ENCODE measurements at regions of chr7 and their contacts with region 1.

Region 1: DNA sequence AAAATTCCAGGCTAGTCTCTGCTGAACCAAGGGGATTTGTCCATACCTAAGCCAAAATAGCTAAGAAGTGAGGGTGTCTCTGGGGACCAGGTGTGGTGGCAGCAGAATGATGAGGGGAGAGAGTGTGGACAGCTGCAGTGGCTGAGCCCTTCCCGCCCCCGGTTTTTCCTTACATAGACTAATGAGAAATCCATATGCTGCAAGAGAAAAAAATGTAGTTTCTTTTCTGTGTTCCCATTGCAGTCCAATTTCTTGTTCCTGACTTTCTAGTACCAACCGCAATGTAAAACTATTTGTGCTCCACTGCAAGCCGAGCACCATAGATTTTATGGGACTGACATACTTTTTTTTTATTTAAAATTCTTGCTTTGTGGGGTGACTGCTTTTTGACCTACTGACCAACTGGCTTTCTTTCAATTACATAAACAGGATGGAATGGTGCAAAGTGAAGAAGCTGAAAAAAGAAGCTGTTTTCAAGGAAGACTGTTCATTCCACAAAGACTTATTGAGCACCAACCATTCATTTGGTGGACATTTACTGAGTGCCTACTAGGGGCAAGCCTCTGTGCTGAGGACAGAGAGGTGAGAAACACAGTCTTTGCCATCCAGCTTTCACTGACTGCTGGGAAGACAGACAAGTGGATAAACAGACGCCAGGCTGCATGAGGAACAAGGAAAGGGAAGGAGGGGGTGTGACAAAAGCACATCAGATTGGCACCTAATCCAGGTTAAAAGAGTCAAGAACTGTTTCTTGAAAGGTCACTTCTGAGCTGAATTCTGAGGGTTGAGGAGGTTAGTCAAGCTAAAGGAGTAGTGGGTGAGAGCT is 9.8 kb downstream of the CEP41 start:
- DNase-seq: no peak
- ATAC-seq: no peak
- H3K4me3 ChIP-seq: no peak overlapping the region
- H3K4me3 Mint-ChIP-seq: no peak overlapping the region
- H3K27ac ChIP-seq: no peak overlapping the region
- H3K27ac Mint-ChIP-seq: no peak overlapping the region
- H3K4me1 ChIP-seq: peaks cover 9 to 53% of the 10 kb centered on the region in 2 experiments
- H3K4me1 Mint-ChIP-seq: peaks cover 17 to 23% (median 22%) of the 10 kb centered on the region in 3 donors
- H3K27me3 ChIP-seq: no peaks in the 10 kb centered on the region
- H3K27me3 Mint-ChIP-seq: no peaks in the 10 kb centered on the region

Region 2: GRCh38 chr7:130452951-130453350 is 21.9 kb after region 1 on chr7:
- CTCF ChIA-PET with region 1: no interaction called
- POLR2A ChIA-PET with region 1: interaction called in 1 of 2 experiments, 10 read pairs
- DNase-seq: no peak
- ATAC-seq: no peak
- H3K4me3 ChIP-seq: no peak overlapping the region
- H3K4me3 Mint-ChIP-seq: no peak overlapping the region
- H3K27ac ChIP-seq: no peak overlapping the region
- H3K27ac Mint-ChIP-seq: no peak overlapping the region
- H3K4me1 ChIP-seq: no peaks in the 10 kb centered on the region
- H3K4me1 Mint-ChIP-seq: peaks cover under 1 to 17% (median 3%) of the 10 kb centered on the region in 3 donors
- H3K27me3 ChIP-seq: no peaks in the 10 kb centered on the region
- H3K27me3 Mint-ChIP-seq: peaks cover 0 to 4% of the 10 kb centered on the region in 2 donors

Region 3: GRCh38 chr7:131164025-131164899 is 733.2 kb after region 1 on chr7:
- CTCF ChIA-PET with region 1: no interaction called
- POLR2A ChIA-PET with region 1: no interaction called
- DNase-seq: no peak
- ATAC-seq: no peak
- H3K4me3 ChIP-seq: no peak overlapping the region
- H3K4me3 Mint-ChIP-seq: no peak overlapping the region
- H3K27ac ChIP-seq: no peak overlapping the region
- H3K27ac Mint-ChIP-seq: no peak overlapping the region
- H3K4me1 ChIP-seq: no peaks in the 10 kb centered on the region
- H3K4me1 Mint-ChIP-seq: no peaks in the 10 kb centered on the region
- H3K27me3 ChIP-seq: peaks cover 0 to 6% of the 10 kb centered on the region in 2 experiments
- H3K27me3 Mint-ChIP-seq: no peaks in the 10 kb centered on the region

Region 4: DNA sequence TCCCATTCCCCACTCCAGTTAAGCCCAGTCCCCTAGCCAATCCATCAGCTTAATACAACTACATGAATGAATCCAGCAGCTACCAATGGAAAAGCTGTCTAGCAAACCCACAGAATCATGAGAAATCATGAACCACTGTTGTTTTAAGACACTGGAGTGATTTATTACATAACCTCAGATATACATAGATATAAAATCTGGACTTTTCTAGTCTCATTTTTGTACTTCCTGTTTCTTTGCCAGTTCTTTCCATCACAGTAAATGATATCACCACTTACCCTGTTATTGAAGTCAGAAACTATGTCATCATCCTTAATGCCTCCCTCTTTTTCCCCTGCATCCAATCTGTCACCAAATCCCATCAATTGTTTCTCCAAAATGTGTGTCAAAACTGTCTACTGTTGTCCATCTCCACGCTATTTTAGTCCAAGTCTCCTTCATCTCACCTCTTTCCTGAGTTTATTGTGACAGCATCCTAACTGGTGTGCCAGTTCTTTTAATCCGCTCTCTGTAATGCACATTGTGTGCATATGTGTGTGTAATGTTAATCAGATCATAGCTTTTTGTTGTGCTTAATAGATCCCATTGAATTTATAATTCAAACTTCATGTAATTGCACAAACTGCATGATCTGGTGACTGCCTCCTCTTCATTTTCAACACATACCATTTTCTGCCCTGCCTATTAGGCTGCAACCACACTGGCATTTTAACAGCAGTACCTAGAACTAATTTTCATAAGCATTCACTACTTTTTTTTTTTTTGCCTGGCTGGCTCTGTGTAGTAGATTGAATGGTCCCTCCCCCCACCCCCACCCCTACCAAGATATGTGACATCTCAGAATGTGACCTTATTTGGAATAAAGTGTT is 952.6 kb after region 1 on chr7:
- CTCF ChIA-PET with region 1: no interaction called
- POLR2A ChIA-PET with region 1: no interaction called
- DNase-seq: no peak
- ATAC-seq: no peak
- H3K4me3 ChIP-seq: no peak overlapping the region
- H3K4me3 Mint-ChIP-seq: no peak overlapping the region
- H3K27ac ChIP-seq: no peak overlapping the region
- H3K27ac Mint-ChIP-seq: no peak overlapping the region
- H3K4me1 ChIP-seq: peaks cover 5 to 7% of the 10 kb centered on the region in 2 experiments
- H3K4me1 Mint-ChIP-seq: peaks cover 45 to 54% (median 49%) of the 10 kb centered on the region in 3 donors
- H3K27me3 ChIP-seq: no peaks in the 10 kb centered on the region
- H3K27me3 Mint-ChIP-seq: no peaks in the 10 kb centered on the region